ENCODE measurements at regions of chr14 and their contacts with region 1.

Region 1: DNA sequence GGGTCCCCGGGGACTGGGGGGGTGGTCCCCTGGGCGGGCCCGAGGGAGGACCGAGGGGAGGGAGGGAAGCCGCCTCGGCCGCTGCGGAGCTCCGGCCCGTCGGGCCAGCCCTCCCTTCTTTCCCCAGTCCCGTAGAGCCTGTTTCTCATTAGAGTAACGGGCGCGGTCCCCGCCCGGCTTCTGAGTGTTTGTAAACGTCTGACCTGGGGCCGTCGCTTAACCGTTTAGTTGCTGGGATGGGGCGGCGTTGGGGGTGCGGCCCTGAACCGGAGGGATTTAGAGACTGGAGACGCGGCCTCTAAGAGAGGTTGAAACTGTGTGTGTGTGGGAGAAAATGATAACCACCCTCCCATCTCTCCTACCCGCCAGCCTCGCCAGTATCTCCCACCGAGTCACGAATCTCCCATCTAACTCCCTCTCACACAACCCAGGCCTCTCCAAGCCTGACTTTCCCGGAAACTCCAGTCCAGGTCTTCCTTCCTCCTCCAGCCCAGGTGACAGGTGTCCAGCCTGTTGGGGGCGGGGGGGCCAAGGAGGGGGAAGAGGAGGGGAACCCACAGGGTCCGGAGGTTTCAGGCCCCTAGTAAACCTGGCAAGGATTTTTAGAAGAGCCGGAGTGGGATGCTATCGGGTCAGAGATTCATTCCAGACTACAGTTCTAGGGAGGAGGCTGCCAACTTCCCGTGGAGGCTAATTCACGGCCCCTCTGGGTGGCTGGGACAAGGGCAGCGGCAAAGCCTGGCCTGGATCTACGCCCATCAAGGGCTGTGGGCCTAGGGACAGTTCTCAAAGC is 1.1 kb upstream of the NFATC4 start:
- DNase-seq: peak; percentile 89
- ATAC-seq: peak; percentile 54 to 81

Region 2: GRCh38 chr14:24310646-24311604 is 56.0 kb before region 1 on chr14 and contains the start of gene LTB4R:
- intact Hi-C with region 1: no loop called
- DNase-seq: peak; percentile 82
- ATAC-seq: peak; percentile 87 to 90
- total RNA-seq, gene LTB4R: 2.8 to 3.2 TPM

Region 3: DNA sequence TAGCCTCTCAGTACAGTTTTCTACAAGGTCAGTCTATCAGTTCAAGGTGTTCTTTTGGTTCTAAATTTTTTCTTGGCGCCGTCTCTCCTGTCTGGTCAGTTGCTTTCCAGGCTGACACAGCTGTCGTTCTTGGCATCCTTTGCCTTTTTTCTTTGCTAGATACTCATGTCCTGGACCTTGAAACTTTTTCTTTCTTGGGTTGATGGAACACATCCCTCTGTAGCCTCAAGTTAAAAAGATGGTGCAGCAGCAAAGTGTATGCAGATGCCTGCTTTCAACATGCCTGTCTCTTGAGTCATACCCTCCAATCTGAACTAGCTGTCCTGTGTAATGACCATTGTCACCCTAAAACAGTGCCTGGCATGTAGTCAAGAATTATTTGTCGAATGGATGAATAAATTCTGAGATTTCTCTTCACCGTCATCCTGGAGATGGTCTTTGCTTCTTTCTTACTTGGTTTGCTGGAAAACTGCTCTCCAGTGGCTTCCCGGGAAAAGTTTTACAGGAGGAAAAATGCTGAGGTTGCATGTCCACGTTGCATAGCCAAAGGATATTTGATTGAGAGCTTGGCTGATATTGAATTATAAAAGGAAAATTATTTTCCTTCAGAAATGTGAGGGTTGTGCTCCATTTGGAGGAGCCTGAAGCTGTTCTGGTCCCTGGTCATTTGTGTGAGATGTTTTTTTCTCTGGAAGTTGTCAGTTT is 36.5 kb after region 1 on chr14:
- intact Hi-C with region 1: loop called in 1 of 2 experiments (anchors 5 kb)
- DNase-seq: no peak
- ATAC-seq: peak in 1 of 2 donors; percentile 41

Region 4: DNA sequence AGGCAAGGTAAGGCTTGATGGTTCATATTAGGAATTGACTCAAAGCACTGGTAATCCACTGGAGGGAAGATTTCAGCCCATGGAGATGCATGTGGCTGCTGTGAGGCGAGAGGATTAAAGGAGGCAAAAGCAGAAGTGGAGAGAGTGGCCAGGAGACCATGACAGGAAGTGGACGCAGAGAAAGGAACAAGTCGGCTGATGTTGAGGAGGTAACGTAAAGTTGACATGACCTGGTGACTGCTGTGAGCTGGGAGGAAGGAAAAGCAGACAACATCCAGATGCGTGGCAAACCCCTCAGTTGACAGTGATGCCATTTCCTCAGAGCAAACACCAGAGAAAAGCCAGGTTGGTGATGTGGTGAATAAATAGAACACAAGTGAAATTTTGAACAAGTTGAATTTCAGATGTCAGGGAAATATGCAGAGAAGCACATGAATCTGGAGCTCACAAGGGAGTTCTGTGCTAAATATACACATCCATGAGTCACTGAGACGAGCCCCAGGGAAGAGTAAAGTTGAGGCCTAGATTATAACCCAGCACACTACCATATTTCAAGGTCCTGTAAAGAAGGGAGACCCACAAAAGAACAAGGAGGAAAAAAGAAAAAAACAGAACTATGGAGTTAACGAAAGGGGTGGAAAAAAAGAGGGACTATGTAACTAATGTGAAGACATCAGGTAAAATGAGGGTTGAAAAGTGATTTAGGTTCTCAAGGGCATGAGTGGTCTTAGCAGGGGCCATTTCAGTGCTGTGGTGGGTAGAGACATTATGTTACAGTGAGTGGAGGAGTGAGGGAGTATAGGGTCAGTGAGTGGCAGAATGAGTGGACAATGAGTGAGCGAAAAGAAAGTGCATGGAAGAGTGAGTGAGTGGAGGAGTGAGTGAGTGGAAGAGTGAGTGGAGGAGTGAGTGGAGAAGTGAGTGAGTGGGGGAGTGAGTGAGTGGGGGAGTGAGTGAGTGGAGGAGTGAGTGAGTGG is 328.6 kb after region 1 on chr14:
- intact Hi-C with region 1: no loop called
- DNase-seq: no peak
- ATAC-seq: peak in 1 of 2 donors; percentile 36

Region 5: GRCh38 chr14:24774187-24774915 is 407.4 kb after region 1 on chr14:
- intact Hi-C with region 1: no loop called
- DNase-seq: no peak
- ATAC-seq: peak in 1 of 2 donors; percentile 70

Measured in left cardiac atrium (tissue), 4 donors.